A673 (cell line): ENCODE measurements at regions of chr9 and their contacts with region 1.

Region 1: DNA sequence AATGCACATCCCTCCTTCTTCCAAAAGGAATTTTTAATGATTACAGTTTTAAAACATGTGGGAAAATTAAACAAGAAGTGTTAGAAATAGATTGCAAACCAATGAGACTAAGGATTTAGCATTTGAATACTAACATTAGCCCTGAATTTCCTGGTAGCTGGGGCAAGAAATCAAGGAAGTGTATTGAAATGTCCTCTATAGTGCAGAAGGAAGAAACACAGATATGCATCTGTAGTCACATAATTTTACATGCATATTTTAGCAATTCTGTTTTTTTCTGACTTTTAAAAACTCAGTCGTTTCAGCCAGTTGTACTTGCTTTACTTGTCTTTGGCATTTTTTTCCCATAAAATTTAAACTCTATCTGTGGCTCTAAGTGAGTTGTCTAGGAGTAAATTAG is 45.8 kb downstream of the FRMPD1 start:
- DNase-seq: no peak
- H3K4me3 ChIP-seq: no peak overlapping the region
- H3K27ac ChIP-seq: no peak overlapping the region
- H3K4me1 ChIP-seq: no peaks in the 10 kb centered on the region
- H3K27me3 ChIP-seq: peaks cover 50% of the 10 kb centered on the region
- CTCF ChIP-seq: no peak

Region 2: DNA sequence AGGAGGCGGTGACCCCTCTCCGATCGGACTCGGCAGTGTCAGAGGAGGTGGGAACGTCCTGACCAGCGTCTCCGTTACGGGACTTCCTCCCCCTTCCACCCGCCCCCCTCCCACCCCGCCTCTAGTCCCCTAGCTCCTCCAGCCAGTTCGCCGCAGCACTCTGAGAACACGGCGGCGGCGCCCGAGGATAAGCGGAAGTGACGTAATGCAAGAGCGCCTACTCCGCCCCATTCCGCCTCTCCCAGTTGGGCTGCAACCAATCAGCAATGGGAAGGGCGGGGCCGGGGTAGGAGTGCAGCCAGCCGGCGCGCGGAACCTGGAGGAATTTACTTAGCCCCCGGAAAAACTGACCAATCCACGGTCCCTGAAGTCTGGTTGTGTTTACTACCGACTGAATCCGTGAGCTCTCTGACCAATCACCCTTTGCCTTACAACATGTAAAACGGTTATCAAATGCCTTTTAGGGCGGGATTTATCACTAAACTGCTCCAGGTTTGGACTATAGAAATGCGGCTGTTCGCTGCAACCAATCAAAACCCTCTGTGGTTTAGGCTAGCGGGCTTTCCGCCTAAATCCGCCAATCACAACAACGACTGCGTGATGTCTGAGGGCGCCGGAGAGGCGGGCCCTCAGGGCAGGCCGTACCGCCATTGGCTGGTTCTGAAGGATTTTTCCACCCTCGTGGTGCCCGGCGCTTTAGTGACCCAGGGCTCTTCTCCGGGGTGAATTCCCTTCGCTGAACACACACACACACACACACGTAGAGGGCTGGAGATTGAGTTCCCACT is 231.1 kb before region 1 on chr9 and contains the start of gene ZBTB5:
- CTCF ChIA-PET with region 1: no interaction called
- POLR2A ChIA-PET with region 1: no interaction called
- intact Hi-C with region 1: no loop called
- DNase-seq: peak; percentile 99
- H3K4me3 ChIP-seq: peak within 1 kb of the TSS; percentile 98
- H3K27ac ChIP-seq: peak within 1 kb of the TSS; percentile 93
- H3K4me1 ChIP-seq: peaks cover 24% of the 10 kb centered on the region
- H3K27me3 ChIP-seq: no peaks in the 10 kb centered on the region
- CTCF ChIP-seq: no peak
- total RNA-seq, gene ZBTB5: 17.2 and 18.0 TPM in 2 replicates

Region 3: DNA sequence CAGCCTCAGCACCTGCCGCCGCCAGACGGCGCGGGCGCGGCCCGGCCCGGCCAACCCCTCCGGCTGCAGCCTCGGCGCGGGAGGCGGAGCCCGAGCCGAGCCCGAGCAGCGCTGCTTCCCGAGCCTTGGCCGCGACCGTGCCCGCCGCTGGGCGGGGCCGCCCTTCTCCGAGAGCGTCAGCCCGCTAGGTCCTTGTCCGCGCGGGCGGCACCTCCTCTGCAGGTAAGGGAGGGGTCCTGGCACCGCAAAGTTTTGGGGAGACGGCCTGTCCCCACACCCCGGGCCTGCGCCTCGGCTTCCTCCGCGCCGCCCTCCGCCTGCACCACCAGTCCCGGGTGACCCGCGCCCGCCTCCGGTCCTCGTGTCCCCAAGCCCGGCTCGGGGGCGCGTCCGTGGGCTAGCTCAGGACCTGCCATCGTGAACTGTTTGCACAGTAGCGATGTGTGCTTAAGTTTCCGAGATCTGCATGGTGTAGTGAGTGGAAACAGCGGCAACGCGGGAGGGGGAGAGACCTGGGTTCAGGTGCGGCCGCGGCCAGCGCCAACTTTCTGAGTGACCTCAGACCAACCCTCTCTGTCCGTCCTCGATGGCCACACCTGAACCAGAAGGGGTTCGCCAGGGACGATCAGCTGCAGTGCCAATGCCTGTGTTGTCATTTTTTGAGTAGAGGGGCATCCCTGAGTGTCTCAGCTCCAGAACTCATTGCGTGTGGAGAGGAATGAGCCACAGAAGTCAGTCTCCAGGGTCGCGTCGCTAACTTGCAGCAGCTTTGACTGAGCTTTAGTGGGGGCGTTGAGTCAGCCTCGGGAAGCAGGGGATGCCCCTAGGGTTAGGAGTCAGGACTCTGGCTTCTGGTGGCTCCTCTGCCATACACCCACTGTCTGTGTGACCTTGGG is 45.4 kb before region 1 on chr9 and contains the start of gene FRMPD1:
- CTCF ChIA-PET with region 1: no interaction called
- POLR2A ChIA-PET with region 1: no interaction called
- intact Hi-C with region 1: loop called (anchors 5 kb)
- DNase-seq: peak; percentile 56
- H3K4me3 ChIP-seq: peak within 1 kb of the TSS; percentile 52
- H3K27ac ChIP-seq: no peak within 1 kb of the TSS
- H3K4me1 ChIP-seq: peaks cover 4% of the 10 kb centered on the region
- H3K27me3 ChIP-seq: peaks cover 73% of the 10 kb centered on the region
- CTCF ChIP-seq: no peak
- total RNA-seq, gene FRMPD1: not detected in 2 replicates